GM10248 (cell line): ENCODE measurements at regions of chr9 and their contacts with region 1.

Region 1: DNA sequence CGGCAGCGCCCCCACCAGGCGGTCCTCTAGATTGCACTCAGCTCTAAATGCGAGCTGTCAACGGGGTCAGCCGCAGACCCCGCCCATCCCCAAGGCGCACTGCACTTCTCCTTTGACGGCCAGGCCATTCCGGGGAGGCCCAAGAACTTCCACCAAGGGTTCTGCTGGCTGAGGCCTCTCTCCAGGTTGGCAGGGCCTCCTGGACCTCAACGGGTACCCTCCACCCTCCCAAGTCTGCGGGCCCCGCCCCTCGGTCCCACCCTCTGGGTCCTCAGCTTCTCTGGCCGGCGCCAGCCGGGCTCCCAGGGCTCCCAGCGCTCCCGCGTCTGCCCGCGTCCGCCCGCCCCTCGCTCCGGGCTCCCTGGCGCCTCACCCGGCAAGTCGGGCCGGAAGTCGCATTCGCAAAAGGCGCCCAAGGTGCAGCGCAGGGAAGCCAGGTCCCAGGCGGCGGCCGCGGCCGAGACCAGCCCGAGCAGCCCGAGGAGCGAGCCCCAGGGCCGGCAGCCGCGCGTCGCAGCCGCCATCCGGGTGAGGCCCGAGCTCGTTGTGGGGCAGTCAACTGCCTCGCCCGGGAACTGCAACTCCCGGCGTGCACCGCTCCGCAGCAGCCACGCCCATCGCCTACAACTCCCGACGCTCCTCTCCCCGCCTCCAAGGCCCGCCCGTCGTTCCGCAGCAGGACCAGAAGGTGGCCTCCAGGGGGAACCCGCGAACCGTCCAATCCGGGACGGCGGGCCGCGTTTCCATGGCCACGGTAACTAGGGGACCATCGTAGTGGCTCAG is at the start of gene TOR2A:
- DNase-seq: peak; percentile 99
- CTCF ChIP-seq: peak; percentile 99

Region 2: GRCh38 chr9:127503947-127504782 is 230.8 kb before region 1 on chr9:
- CTCF ChIA-PET with region 1: interaction called, 14 read pairs
- POLR2A ChIA-PET with region 1: no interaction called
- DNase-seq: peak; percentile 78
- CTCF ChIP-seq: peak; percentile 92

Region 3: GRCh38 chr9:127707726-127708147 is 27.2 kb before region 1 on chr9:
- CTCF ChIA-PET with region 1: interaction called, 28 read pairs
- POLR2A ChIA-PET with region 1: no interaction called
- DNase-seq: peak; percentile 58
- CTCF ChIP-seq: no peak

Region 4: DNA sequence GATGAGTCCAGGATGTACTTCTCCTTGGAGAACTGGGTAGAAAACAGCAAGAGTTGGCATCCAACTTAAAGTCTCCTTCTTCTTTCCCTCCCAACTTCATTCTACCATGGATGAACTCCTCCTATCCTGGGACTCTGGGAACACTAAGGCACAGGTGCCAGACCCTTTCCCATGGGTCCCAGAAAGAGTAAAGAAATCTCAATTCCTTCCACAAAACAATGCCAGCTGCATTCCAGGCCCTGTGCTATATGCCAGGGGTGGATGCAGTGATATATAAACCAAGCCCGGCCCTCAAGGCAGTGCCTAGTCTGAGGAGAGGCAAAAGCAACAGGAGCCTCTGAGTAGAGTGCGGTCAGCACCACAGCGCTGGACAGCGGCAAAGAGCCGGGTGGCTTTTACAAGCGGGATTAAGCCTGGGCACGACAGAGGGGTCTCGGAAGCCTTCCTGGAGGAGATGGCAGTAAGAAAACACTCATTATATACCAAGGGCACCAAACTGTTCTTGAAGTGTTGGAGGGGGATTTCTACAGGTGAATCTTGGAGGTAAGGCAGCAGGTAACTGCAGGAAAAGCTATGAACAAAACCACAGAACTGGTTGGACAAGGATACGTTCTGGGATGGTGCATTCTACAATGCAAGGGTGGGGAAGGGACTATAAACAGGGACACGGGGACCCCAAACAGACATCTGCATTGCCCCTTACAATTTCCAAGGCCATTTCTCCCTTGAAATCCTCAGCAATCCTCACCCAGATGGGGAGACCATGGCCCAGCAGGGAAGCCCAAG is 16.5 kb after region 1 on chr9:
- CTCF ChIA-PET with region 1: interaction called, 26 read pairs
- POLR2A ChIA-PET with region 1: no interaction called
- DNase-seq: no peak
- CTCF ChIP-seq: no peak

Region 5: DNA sequence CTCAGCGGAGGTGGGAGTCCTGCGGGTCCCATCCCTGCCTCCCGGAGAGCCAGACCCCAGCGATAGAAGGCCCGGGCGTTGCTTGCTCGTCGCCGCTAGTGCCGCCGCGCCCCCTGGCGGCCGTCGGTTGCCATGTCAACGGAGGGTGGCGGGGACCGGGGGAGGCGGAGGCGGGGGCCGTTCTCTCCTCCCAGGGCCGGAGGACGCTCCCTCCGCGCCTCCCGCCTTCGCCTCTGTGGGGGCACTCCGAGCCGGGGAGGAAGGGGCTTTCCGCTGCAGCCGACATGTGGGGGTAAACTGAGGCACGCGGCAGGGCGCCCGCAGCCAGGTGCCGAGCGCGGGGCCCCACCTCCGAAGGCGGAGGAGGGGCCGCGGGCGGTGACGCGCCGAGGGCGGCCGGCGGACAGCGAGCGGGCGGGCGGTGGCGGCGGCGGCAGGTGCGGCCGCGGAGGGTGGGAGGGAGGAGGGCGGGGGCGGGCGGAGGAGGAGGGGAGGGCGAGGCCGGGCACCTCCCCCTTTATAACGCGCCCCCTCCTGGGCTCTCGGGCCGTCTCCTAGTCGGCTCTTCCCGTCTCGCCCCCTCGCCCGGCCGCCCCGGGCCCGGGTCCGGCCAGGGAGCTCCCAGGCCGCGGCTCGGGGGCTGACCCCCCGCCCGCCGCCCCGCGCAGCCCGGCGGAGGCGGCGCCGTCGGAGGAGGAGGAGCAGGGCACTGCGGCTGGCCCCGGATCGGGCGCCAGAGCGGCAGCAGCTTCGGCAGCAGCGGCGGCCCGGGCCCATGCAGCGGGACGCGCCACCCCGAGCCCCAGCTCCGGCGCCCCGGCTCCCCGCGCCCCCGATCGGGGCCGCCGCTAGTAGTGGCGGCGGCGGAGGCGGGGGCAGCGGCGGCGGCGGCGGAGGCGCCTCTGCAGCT is 50.3 kb after region 1 on chr9:
- CTCF ChIA-PET with region 1: interaction called, 62 read pairs
- POLR2A ChIA-PET with region 1: no interaction called
- DNase-seq: peak; percentile 88
- CTCF ChIP-seq: peak; percentile 75

Region 6: DNA sequence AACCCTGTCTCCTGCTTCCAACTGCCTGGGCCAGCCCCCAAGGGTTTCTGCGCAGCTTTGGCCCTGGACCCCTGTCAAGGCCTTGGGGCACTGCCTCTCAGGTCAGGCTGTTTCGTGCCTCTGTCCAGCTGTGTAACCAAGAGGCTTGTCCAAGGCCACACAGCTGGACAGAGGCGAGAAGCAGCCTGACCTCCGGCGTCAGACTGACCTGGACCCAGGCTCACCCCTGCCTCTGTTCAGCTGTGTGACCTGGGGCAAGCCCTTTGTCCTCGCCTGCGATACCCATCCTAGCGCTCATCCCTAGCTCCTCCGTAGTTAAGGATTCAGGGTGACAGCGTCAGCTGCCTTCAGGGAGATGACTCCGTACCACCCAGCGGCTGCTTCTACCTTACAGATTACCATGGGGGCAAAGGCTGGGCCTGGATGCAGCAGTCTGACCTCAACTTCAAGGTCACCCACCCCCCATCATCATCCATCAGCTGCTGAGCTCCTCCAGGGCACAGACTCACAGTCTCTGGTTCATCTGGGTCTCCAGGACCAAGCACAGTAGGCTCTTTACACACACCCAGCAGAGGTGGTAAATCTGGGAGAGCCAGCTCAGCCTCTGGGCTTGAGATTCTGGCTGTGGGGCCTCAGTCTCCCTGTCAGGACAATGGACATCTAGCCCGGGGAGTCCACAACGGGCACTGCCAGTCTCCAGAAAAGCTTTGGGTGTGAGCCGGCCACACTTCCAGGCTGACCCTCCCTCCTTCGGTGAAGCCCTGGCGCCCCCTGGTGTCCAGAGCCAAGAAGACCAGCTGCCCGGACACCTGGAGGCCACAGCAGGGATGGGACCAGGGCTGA is 134.6 kb after region 1 on chr9:
- CTCF ChIA-PET with region 1: interaction called, 35 read pairs
- POLR2A ChIA-PET with region 1: interaction called, 3 read pairs
- DNase-seq: peak; percentile 94
- CTCF ChIP-seq: peak; percentile 96